Activated B cell treated with CpG ODN at 0.5 μM for 24 hours (primary cell): ENCODE measurements at regions of chr16 and their contacts with region 1.

Region 1: DNA sequence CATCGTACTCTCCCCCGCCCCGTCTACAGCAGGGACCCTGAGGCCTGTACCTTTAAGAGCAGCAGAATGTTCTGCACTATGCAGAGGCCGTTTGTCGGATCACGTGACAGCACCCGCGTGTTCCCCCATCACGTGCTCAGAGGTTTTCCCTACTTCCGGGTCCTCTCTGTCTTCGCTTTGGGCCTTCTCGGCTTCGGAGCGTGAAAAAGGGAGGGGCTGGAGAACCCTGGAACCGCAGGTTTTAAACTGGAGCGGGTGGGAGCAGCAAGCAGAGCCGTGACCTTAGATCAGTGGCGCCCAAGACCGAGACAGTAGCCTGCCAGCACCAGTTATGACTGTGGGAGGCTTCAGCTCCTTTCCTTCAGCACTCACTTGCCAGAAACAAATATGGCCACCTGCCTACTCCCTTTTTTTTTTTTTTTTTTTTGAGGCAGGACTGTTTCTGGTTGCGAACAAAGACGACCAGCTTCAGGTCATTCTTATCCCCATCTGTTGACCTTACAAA is at the start of gene CLN3:
- DNase-seq: peak; percentile 80
- ATAC-seq: peak; percentile 72
- H3K4me3 Mint-ChIP-seq: peak within 1 kb of the TSS; percentile 96
- H3K27ac Mint-ChIP-seq: peak within 1 kb of the TSS; percentile 100
- H3K4me1 Mint-ChIP-seq: peaks cover 48% of the 10 kb centered on the region
- H3K27me3 Mint-ChIP-seq: no peaks in the 10 kb centered on the region
- CTCF ChIP-seq: no peak
- total RNA-seq, gene CLN3: 27.9 and 32.0 TPM in 2 replicates

Region 2: GRCh38 chr16:28524681-28525171 is 32.7 kb after region 1 on chr16:
- CTCF ChIA-PET with region 1: no interaction called
- POLR2A ChIA-PET with region 1: no interaction called
- intact Hi-C with region 1: no loop called
- DNase-seq: no peak
- ATAC-seq: peak; percentile 69
- H3K4me3 Mint-ChIP-seq: no peak overlapping the region
- H3K27ac Mint-ChIP-seq: no peak overlapping the region
- H3K4me1 Mint-ChIP-seq: peaks cover 8% of the 10 kb centered on the region
- H3K27me3 Mint-ChIP-seq: peaks cover 2% of the 10 kb centered on the region
- CTCF ChIP-seq: no peak

Region 3: GRCh38 chr16:28553776-28554633 is 62.0 kb after region 1 on chr16 and contains the start of gene SGF29:
- CTCF ChIA-PET with region 1: interaction called, 3 read pairs
- POLR2A ChIA-PET with region 1: interaction called, 20 read pairs
- intact Hi-C with region 1: loop called (anchors 1 kb)
- DNase-seq: peak; percentile 86
- ATAC-seq: peak; percentile 90
- H3K4me3 Mint-ChIP-seq: peak within 1 kb of the TSS; percentile 91
- H3K27ac Mint-ChIP-seq: peak within 1 kb of the TSS; percentile 97
- H3K4me1 Mint-ChIP-seq: peaks cover 27% of the 10 kb centered on the region
- H3K27me3 Mint-ChIP-seq: peaks cover 4% of the 10 kb centered on the region
- CTCF ChIP-seq: no peak
- total RNA-seq, gene SGF29: 34.1 and 40.3 TPM in 2 replicates

Region 4: DNA sequence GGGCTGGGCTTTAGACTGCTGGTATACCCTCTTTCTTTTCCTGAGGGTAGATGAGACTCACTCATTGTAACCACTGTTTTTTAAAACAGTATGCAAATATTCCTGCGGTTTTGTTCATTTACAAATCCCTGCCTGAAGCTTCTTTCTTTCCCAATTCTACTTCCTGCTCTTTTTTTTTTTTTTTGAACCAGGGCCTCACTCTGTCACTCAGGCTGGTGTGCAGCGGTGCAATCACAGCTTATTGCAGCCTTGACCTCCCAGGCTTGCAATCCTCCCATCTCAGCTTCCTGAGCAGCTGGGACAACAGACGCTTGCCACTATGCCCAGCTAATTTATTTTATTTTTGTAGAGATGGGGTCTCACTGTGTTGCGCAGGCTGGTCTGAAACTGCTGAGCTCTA is 125.9 kb after region 1 on chr16:
- CTCF ChIA-PET with region 1: no interaction called
- POLR2A ChIA-PET with region 1: no interaction called
- intact Hi-C with region 1: loop called (anchors 5 kb)
- DNase-seq: no peak
- ATAC-seq: no peak
- H3K4me3 Mint-ChIP-seq: no peak overlapping the region
- H3K27ac Mint-ChIP-seq: no peak overlapping the region
- H3K4me1 Mint-ChIP-seq: peaks cover 18% of the 10 kb centered on the region
- H3K27me3 Mint-ChIP-seq: no peaks in the 10 kb centered on the region
- CTCF ChIP-seq: no peak

Region 5: DNA sequence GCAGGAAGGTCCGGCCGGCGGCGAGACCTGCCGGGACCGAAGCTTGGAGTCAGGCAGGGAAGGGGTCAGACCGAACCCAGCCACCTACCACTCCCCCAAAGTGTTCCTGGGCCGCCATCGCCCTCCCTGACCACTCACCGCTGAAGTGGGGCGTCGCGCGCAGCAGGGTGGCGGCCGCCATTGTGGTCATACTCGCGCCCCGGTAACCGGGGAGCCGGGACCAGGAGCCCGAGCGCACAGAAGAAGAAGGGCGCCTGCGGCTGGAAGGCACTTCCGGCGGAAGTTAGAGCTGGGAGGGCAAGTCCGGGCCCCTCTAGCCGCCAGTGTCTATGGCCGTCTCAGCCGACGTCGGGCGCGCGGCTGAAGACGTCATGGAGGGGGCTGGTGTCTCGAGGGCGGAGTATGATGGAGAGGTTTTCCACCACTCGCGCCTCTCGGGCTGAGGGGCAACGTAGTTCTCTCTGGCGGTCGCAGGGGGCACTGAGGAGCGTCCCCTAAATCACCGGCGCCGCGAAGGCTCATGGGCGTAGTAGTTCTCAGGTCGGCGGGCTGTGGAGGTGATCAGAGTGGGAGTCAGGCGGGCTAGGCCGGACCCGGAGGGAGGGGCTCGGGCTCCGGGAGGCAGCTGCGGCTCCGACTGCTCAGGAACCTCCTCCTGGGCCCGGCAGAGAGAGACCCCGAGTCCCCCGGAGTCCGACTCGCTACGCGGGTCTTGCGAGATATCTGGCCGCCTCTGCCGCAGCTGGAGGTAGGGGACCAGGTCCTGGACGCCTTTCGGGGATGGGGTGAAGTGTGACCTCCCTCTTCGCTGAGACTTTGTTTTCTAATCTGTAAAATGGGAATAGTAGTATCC is 354.3 kb after region 1 on chr16 and contains the start of gene TUFM:
- CTCF ChIA-PET with region 1: no interaction called
- POLR2A ChIA-PET with region 1: interaction called, 10 read pairs
- intact Hi-C with region 1: no loop called
- DNase-seq: peak; percentile 96
- ATAC-seq: peak; percentile 97
- H3K4me3 Mint-ChIP-seq: peak within 1 kb of the TSS; percentile 95
- H3K27ac Mint-ChIP-seq: peak within 1 kb of the TSS; percentile 90
- H3K4me1 Mint-ChIP-seq: peaks cover 28% of the 10 kb centered on the region
- H3K27me3 Mint-ChIP-seq: no peaks in the 10 kb centered on the region
- CTCF ChIP-seq: no peak
- total RNA-seq, gene TUFM: 189 and 206 TPM in 2 replicates

Region 6: DNA sequence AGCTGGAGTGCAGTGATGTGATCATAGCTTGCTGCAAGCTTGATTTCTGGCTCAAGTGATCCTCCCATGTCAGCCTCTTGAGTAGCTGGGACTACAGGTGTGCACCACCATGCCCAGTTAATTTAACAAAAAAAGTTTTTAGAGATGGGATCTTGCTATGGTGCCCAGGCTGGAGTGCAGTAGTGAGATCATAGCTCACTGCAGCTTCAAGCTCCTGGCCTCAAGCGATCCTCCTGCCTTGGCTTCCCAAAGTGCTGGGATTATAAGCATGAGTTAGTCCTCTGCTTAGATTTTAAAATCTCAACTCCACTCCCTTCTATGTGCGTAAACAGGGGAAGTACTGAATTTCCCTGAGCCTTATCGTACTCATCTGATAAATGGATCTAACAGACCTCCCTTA is 426.7 kb after region 1 on chr16:
- CTCF ChIA-PET with region 1: no interaction called
- POLR2A ChIA-PET with region 1: no interaction called
- intact Hi-C with region 1: no loop called
- DNase-seq: no peak
- ATAC-seq: no peak
- H3K4me3 Mint-ChIP-seq: no peak overlapping the region
- H3K27ac Mint-ChIP-seq: no peak overlapping the region
- H3K4me1 Mint-ChIP-seq: peaks cover 31% of the 10 kb centered on the region
- H3K27me3 Mint-ChIP-seq: no peaks in the 10 kb centered on the region
- CTCF ChIP-seq: no peak

Region 7: GRCh38 chr16:28930652-28931051 is 438.6 kb after region 1 on chr16:
- CTCF ChIA-PET with region 1: no interaction called
- POLR2A ChIA-PET with region 1: interaction called, 3 read pairs
- intact Hi-C with region 1: loop called (anchors 5 kb)
- DNase-seq: peak; percentile 60
- ATAC-seq: peak; percentile 76
- H3K4me3 Mint-ChIP-seq: peak overlapping the region; percentile 99
- H3K27ac Mint-ChIP-seq: peak overlapping the region; percentile 98
- H3K4me1 Mint-ChIP-seq: peaks cover 75% of the 10 kb centered on the region
- H3K27me3 Mint-ChIP-seq: no peaks in the 10 kb centered on the region
- CTCF ChIP-seq: no peak

Region 8: GRCh38 chr16:28974437-28975157 is 482.6 kb after region 1 on chr16 and contains the start of gene SPNS1:
- CTCF ChIA-PET with region 1: no interaction called
- POLR2A ChIA-PET with region 1: interaction called, 4 read pairs
- intact Hi-C with region 1: loop called (anchors 5 kb)
- DNase-seq: peak; percentile 91
- ATAC-seq: peak; percentile 91
- H3K4me3 Mint-ChIP-seq: peak within 1 kb of the TSS; percentile 94
- H3K27ac Mint-ChIP-seq: peak within 1 kb of the TSS; percentile 94
- H3K4me1 Mint-ChIP-seq: peaks cover 31% of the 10 kb centered on the region
- H3K27me3 Mint-ChIP-seq: no peaks in the 10 kb centered on the region
- CTCF ChIP-seq: no peak
- total RNA-seq, gene SPNS1: 26.6 and 29.2 TPM in 2 replicates